ENCODE measurements at regions of chr5 and their contacts with region 1.

Region 1: GRCh38 chr5:57887851-57888621 is 405.4 kb upstream of the ACTBL2 start:
- DNase-seq: peak; percentile 72
- H3K4me3 ChIP-seq: no peak overlapping the region
- H3K27ac ChIP-seq: peak overlapping the region; percentile 75
- H3K4me1 ChIP-seq: peaks cover 30% of the 10 kb centered on the region
- H3K27me3 ChIP-seq: no peaks in the 10 kb centered on the region
- CTCF ChIP-seq: peak; percentile 85 to 88

Region 2: GRCh38 chr5:57298295-57298984 is 589.6 kb before region 1 on chr5:
- CTCF ChIA-PET with region 1: no interaction called
- dilution Hi-C with region 1: no loop called
- in situ Hi-C with region 1: no loop called
- intact Hi-C with region 1: loop called (anchors 2 kb)
- DNase-seq: peak; percentile 73
- H3K4me3 ChIP-seq: no peak overlapping the region
- H3K27ac ChIP-seq: no peak overlapping the region
- H3K4me1 ChIP-seq: no peaks in the 10 kb centered on the region
- H3K27me3 ChIP-seq: no peaks in the 10 kb centered on the region
- CTCF ChIP-seq: peak; percentile 76 to 88

Region 3: DNA sequence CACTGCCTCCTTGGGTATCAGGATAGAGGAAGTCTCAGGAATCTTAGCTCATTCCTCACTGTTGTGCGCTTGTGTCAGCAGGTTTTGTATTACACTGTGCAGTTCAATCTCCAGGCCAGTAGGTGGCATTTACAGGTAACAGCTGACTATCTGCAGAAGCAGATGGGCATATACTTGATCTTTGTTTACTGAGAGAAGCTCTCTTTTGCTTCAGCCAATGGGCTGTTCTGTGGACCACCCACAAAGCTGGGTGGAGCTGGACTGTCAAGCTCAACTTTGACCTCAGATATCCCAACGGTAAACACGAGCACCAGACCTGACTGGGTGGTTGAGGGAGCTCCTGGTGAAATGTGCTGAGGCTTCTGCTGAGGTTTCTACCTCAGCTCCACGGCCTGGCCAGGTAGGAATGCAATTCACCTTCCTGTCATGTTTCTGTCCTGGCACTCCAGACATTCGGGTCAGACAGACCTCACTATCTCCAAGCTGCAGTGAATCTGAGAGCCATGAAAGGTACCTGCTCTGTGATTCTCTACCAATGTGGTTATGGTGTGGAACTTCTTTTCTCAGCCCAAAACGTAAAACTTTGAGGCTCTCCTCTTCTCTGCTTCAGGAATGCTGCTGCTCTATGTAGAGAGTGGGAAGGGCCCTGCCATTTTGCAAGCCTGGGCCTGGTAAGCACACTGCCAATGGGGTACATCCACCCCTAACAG is 237.5 kb before region 1 on chr5:
- CTCF ChIA-PET with region 1: interaction called, 8 read pairs
- dilution Hi-C with region 1: no loop called
- in situ Hi-C with region 1: no loop called
- intact Hi-C with region 1: loop called (anchors 1 kb)
- DNase-seq: peak; percentile 74
- H3K4me3 ChIP-seq: no peak overlapping the region
- H3K27ac ChIP-seq: no peak overlapping the region
- H3K4me1 ChIP-seq: peaks cover 5% of the 10 kb centered on the region
- H3K27me3 ChIP-seq: no peaks in the 10 kb centered on the region
- CTCF ChIP-seq: peak; percentile 91 to 93

Region 4: GRCh38 chr5:57804007-57804444 is 84.0 kb before region 1 on chr5:
- CTCF ChIA-PET with region 1: no interaction called
- dilution Hi-C with region 1: no loop called
- in situ Hi-C with region 1: no loop called
- intact Hi-C with region 1: no loop called
- DNase-seq: no peak
- H3K4me3 ChIP-seq: no peak overlapping the region
- H3K27ac ChIP-seq: no peak overlapping the region
- H3K4me1 ChIP-seq: no peaks in the 10 kb centered on the region
- H3K27me3 ChIP-seq: no peaks in the 10 kb centered on the region
- CTCF ChIP-seq: no peak

Region 5: DNA sequence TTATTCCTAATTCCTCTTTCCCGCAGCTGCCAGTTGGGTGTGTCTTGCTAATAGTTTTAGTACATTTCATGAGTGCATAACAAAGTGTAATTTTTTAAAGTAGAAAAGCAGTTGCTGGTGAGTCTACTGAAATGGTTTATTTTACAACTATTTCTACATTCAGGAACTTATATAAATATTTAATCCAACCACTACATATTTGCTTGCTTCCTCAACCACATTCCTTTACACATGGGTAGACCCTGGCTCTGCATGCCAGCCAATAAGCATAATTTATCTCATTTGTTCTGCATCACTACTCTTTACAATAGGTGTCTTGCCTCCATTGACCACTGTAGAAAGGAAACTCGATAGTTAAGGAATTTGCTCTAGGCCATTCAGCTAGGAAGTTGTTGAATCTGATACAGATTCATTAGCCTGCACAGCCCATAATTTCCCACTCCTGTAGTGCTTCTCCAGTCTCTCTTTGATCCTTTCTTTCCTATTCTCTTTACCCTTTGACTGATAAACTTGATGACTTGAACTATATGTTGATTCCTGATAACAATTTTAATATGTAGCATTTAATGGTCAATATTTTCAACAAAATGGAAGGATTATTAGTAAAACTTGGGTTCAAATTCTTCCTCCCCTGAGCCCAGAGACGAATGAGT is 62.9 kb before region 1 on chr5:
- CTCF ChIA-PET with region 1: no interaction called
- dilution Hi-C with region 1: no loop called
- in situ Hi-C with region 1: no loop called
- intact Hi-C with region 1: loop called (anchors 1 kb)
- DNase-seq: peak; percentile 89
- H3K4me3 ChIP-seq: no peak overlapping the region
- H3K27ac ChIP-seq: peak overlapping the region; percentile 99
- H3K4me1 ChIP-seq: peaks cover 36% of the 10 kb centered on the region
- H3K27me3 ChIP-seq: no peaks in the 10 kb centered on the region
- CTCF ChIP-seq: no peak

Region 6: GRCh38 chr5:58188262-58188651 is 300.2 kb after region 1 on chr5:
- CTCF ChIA-PET with region 1: no interaction called
- dilution Hi-C with region 1: no loop called
- in situ Hi-C with region 1: no loop called
- intact Hi-C with region 1: loop called (anchors 1 kb)
- DNase-seq: peak; percentile 91
- H3K4me3 ChIP-seq: no peak overlapping the region
- H3K27ac ChIP-seq: peak overlapping the region; percentile 86
- H3K4me1 ChIP-seq: peaks cover 44% of the 10 kb centered on the region
- H3K27me3 ChIP-seq: no peaks in the 10 kb centered on the region
- CTCF ChIP-seq: peak; percentile 33 to 45

Region 7: DNA sequence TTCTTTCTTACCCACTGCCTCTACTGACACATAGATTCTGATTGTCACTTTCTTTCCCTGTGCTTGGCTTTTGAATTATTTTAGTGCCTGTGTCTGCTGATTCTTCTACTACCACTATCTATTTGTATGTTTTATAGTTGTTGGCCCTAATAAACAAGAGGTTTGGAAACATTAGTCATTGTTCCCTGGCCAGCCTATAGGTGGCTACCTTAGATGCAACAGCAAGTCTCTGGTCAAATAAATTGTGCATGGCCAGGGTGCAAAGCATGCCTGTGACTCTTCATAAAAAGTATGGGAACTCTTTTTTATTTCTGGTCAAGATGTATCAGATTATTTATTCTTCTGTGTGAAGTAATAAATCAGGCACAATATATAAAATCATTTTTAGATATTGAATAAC is 447.5 kb after region 1 on chr5:
- CTCF ChIA-PET with region 1: no interaction called
- dilution Hi-C with region 1: no loop called
- in situ Hi-C with region 1: no loop called
- intact Hi-C with region 1: loop called (anchors 1 kb)
- DNase-seq: peak; percentile 26
- H3K4me3 ChIP-seq: no peak overlapping the region
- H3K27ac ChIP-seq: no peak overlapping the region
- H3K4me1 ChIP-seq: peaks cover 9% of the 10 kb centered on the region
- H3K27me3 ChIP-seq: no peaks in the 10 kb centered on the region
- CTCF ChIP-seq: peak in 1 of 2 donors; percentile 59